CD4-positive, alpha-beta T cell (primary cell): ENCODE measurements at regions of chrX and their contacts with region 1.

Region 1: DNA sequence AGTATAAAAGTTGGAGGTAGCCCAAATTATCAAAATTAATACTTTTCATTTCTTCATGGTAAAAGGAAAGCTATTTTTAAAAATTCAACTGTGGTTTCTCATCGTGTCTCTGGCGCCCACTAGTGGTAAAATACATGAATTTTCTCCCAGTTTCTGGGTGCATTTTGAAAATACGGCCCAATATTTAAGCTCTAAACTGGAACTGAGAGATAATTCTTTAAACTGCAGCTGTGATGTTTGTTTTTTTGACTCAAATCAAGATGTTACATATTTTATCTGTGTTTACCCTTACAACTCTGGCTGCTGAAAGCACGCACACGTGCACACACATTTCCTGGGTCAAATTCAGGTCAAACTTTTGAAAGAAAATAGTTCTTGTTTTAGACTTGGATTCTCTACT is 123.9 kb upstream of the ACSL4 start:
- DNase-seq: peak in 4 of 14 experiments; percentile 23 to 62 (median 48)
- ATAC-seq: no peak
- H3K4me3 ChIP-seq: no peak overlapping the region
- H3K4me3 Mint-ChIP-seq: no peak overlapping the region
- H3K27ac ChIP-seq: no peak overlapping the region
- H3K27ac Mint-ChIP-seq: no peak overlapping the region
- H3K4me1 ChIP-seq: no peaks in the 10 kb centered on the region
- H3K4me1 Mint-ChIP-seq: no peaks in the 10 kb centered on the region
- H3K27me3 ChIP-seq: no peaks in the 10 kb centered on the region
- H3K27me3 Mint-ChIP-seq: no peaks in the 10 kb centered on the region
- CTCF ChIP-seq: peak; percentile 74

Region 2: DNA sequence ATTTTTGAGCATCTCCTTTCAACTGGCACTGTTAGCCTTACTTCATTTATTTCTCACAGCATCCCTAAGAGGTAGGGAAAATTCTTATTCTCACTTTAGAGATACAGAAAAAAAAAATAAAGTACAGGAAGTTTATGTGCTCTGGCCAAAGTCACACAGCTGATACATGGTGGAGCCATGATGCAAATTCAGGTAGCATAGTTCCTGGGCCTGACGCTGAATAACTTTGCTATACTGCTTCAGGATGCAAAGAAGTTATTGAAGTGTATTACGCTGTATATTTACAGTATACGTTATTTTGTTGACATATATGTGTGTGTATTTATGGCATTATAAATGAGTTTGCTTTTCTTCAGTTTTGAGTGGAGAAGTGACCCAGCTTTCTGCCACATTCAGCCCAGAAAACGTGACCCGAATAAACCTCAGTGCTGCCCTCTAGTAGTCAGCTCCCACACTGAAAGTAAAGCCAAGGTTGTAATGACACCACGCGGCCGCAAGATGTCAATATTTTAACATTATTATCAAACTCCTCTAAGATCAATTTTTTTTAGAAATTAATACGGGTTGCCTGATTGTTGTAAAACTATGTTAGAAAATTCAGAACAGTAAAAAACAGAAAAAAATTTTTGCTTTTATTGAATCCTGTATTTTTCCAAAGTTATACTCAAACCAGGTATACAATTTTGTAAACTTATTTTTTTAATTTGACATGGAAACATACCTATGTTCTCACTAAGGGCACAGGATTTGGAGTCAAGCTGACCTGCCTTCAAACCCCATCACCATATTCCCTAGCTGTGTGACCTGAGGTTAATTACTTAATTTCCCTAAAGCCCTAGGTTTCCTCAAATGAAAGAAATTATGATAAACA is 371.3 kb before region 1 on chrX:
- CTCF ChIA-PET with region 1: interaction called, 3 read pairs
- POLR2A ChIA-PET with region 1: no interaction called
- intact Hi-C with region 1: loop called in 1 of 2 experiments (anchors 2 kb)
- DNase-seq: peak; percentile 19 to 78 (median 43)
- ATAC-seq: peak; percentile 78
- H3K4me3 ChIP-seq: no peak overlapping the region
- H3K4me3 Mint-ChIP-seq: no peak overlapping the region
- H3K27ac ChIP-seq: no peak overlapping the region
- H3K27ac Mint-ChIP-seq: no peak overlapping the region
- H3K4me1 ChIP-seq: no peaks in the 10 kb centered on the region
- H3K4me1 Mint-ChIP-seq: no peaks in the 10 kb centered on the region
- H3K27me3 ChIP-seq: peaks cover 0 to 3% of the 10 kb centered on the region in 2 experiments
- H3K27me3 Mint-ChIP-seq: no peaks in the 10 kb centered on the region
- CTCF ChIP-seq: peak; percentile 94

Region 3: GRCh38 chrX:109709129-109709631 is 147.8 kb before region 1 on chrX:
- CTCF ChIA-PET with region 1: interaction called, 41 read pairs
- POLR2A ChIA-PET with region 1: interaction called, 10 read pairs
- intact Hi-C with region 1: loop called (anchors 1 kb)
- DNase-seq: peak in 3 of 14 experiments; percentile 8 to 28 (median 11)
- ATAC-seq: peak; percentile 57
- H3K4me3 ChIP-seq: no peak overlapping the region
- H3K4me3 Mint-ChIP-seq: peak overlapping the region; percentile 27
- H3K27ac ChIP-seq: no peak overlapping the region
- H3K27ac Mint-ChIP-seq: peak overlapping the region; percentile 37
- H3K4me1 ChIP-seq: peaks cover 9% of the 10 kb centered on the region
- H3K4me1 Mint-ChIP-seq: peaks cover 62% of the 10 kb centered on the region
- H3K27me3 ChIP-seq: no peaks in the 10 kb centered on the region
- H3K27me3 Mint-ChIP-seq: no peaks in the 10 kb centered on the region
- CTCF ChIP-seq: no peak

Region 4: GRCh38 chrX:109714340-109714958 is 142.5 kb before region 1 on chrX:
- CTCF ChIA-PET with region 1: interaction called, 41 read pairs
- POLR2A ChIA-PET with region 1: interaction called, 10 read pairs
- intact Hi-C with region 1: loop called (anchors 1 kb)
- DNase-seq: no peak
- ATAC-seq: no peak
- H3K4me3 ChIP-seq: no peak overlapping the region
- H3K4me3 Mint-ChIP-seq: no peak overlapping the region
- H3K27ac ChIP-seq: no peak overlapping the region
- H3K27ac Mint-ChIP-seq: no peak overlapping the region
- H3K4me1 ChIP-seq: peaks cover 5% of the 10 kb centered on the region
- H3K4me1 Mint-ChIP-seq: peaks cover 37% of the 10 kb centered on the region
- H3K27me3 ChIP-seq: no peaks in the 10 kb centered on the region
- H3K27me3 Mint-ChIP-seq: no peaks in the 10 kb centered on the region
- CTCF ChIP-seq: no peak